ENCODE measurements at regions of chr6 and their contacts with region 1.

Region 1: DNA sequence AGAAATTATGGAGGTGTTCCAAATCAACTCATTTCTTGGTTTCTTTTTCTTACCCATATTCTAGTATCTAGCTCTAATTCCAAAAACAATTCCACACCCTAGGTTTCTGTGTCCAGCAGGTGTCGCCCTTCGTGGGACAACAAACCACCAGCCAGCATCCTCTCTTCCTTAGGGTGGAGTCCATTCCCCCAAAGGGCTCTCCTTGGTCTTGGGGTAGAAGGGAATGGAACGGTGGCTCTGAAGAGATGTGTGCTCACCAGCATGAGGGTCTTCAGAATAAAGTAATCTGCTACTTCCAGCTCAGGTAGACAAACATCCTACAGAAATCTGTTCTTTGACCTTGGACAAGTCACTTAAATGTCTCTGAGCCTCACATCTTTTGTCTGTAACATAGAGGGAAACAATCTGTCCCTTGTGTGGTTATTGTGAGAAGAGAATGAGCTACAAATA is 7.2 kb downstream of the HLA-DMB start:
- DNase-seq: peak; percentile 80
- ATAC-seq: peak; percentile 68
- H3K4me3 Mint-ChIP-seq: no peak overlapping the region
- H3K27ac Mint-ChIP-seq: no peak overlapping the region
- H3K4me1 Mint-ChIP-seq: peaks cover 16% of the 10 kb centered on the region
- H3K27me3 Mint-ChIP-seq: peaks cover 12% of the 10 kb centered on the region

Region 2: GRCh38 chr6:32853541-32854375 is 79.9 kb before region 1 on chr6 and contains the starts of genes PSMB9 and TAP1:
- CTCF ChIA-PET with region 1: interaction called, 11 read pairs
- POLR2A ChIA-PET with region 1: no interaction called
- DNase-seq: peak; percentile 97
- ATAC-seq: peak; percentile 85
- H3K4me3 Mint-ChIP-seq: peak within 1 kb of the TSS; percentile 97
- H3K27ac Mint-ChIP-seq: peak within 1 kb of the TSS; percentile 100
- H3K4me1 Mint-ChIP-seq: peaks cover 58% of the 10 kb centered on the region
- H3K27me3 Mint-ChIP-seq: no peaks in the 10 kb centered on the region
- total RNA-seq, gene PSMB9: 319 to 325 TPM
- total RNA-seq, gene TAP1: 319 to 328 TPM

Region 3: DNA sequence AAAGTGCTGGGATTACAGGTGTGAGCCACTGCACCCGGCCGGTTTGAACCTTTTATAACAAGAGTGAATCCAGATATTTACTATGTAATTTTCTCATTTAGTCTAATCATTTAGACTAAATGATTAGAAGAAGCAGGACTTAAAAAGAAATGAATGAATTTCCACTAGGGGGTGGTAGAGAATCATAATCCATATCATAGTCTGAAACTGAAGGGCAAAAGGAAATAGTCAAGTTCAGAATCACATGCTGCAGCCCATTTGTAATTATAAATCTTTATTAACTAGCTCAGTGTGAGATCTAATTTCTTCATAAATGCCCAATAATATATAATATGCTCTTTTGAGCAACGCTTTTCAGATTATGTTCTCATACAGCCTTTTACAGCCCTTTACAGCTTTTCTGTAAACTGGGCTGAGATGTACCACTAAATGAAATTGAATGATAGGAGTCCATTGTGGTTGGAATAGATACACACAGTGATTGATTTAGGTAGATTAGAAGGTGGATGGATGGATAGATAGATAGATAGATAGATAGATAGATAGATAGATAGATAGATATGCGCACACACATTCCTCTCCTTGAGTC is 47.9 kb before region 1 on chr6:
- CTCF ChIA-PET with region 1: interaction called, 13 read pairs
- POLR2A ChIA-PET with region 1: no interaction called
- DNase-seq: no peak
- ATAC-seq: peak; percentile 61
- H3K4me3 Mint-ChIP-seq: no peak overlapping the region
- H3K27ac Mint-ChIP-seq: no peak overlapping the region
- H3K4me1 Mint-ChIP-seq: peaks cover 2% of the 10 kb centered on the region
- H3K27me3 Mint-ChIP-seq: peaks cover 16% of the 10 kb centered on the region

Region 4: GRCh38 chr6:32912951-32913350 is 20.7 kb before region 1 on chr6:
- CTCF ChIA-PET with region 1: interaction called, 14 read pairs
- POLR2A ChIA-PET with region 1: no interaction called
- DNase-seq: no peak
- ATAC-seq: no peak
- H3K4me3 Mint-ChIP-seq: no peak overlapping the region
- H3K27ac Mint-ChIP-seq: no peak overlapping the region
- H3K4me1 Mint-ChIP-seq: peaks cover 1% of the 10 kb centered on the region
- H3K27me3 Mint-ChIP-seq: peaks cover 38% of the 10 kb centered on the region

Region 5: GRCh38 chr6:32947552-32948465 is 14.1 kb after region 1 on chr6:
- CTCF ChIA-PET with region 1: interaction called, 519 read pairs
- POLR2A ChIA-PET with region 1: interaction called, 8 read pairs
- DNase-seq: peak; percentile 67
- ATAC-seq: no peak
- H3K4me3 Mint-ChIP-seq: no peak overlapping the region
- H3K27ac Mint-ChIP-seq: no peak overlapping the region
- H3K4me1 Mint-ChIP-seq: peaks cover 78% of the 10 kb centered on the region
- H3K27me3 Mint-ChIP-seq: no peaks in the 10 kb centered on the region

Region 6: DNA sequence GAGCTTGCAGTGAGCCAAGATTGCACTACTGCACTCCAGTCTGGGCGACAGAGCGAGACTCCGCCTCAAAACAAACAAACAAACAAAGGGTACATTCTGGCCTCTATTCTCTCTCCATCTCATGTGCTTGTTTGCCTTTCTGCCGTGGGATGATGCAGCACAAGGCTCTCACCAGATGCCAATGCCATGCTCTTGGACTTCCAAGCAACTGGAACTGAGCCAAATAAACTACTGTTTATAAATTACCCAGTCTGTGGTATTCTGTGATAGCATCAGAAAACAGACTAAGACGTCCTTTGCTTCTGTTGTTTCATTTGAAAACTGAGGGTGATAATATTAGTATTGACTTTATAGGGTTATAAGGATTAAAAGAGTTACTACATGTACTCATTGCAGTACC is 31.1 kb after region 1 on chr6:
- CTCF ChIA-PET with region 1: interaction called, 519 read pairs
- POLR2A ChIA-PET with region 1: interaction called, 220 read pairs
- DNase-seq: no peak
- ATAC-seq: no peak
- H3K4me3 Mint-ChIP-seq: no peak overlapping the region
- H3K27ac Mint-ChIP-seq: no peak overlapping the region
- H3K4me1 Mint-ChIP-seq: peaks cover 37% of the 10 kb centered on the region
- H3K27me3 Mint-ChIP-seq: no peaks in the 10 kb centered on the region